ENCODE measurements at regions of chr7 and their contacts with region 1.

Region 1: GRCh38 chr7:106865130-106866041 is at the start of gene PIK3CG:
- DNase-seq: peak in 7 of 9 donors; percentile 43 to 77 (median 70)
- ATAC-seq: peak; percentile 96
- H3K4me3 ChIP-seq: peak within 1 kb of the TSS; percentile 62
- H3K4me3 Mint-ChIP-seq: peak within 1 kb of the TSS; percentile 86 to 98 (median 94)
- H3K27ac ChIP-seq: peak within 1 kb of the TSS; percentile 75
- H3K27ac Mint-ChIP-seq: peak within 1 kb of the TSS; percentile 90 to 96 (median 95)
- H3K4me1 ChIP-seq: peaks cover 50% of the 10 kb centered on the region in 2 donors
- H3K4me1 Mint-ChIP-seq: peaks cover 44 to 85% (median 72%) of the 10 kb centered on the region in 7 donors
- H3K27me3 ChIP-seq: no peaks in the 10 kb centered on the region
- H3K27me3 Mint-ChIP-seq: no peaks in the 10 kb centered on the region
- total RNA-seq, gene PIK3CG: 25.1 to 54.9 (median 30.6) TPM

Region 2: DNA sequence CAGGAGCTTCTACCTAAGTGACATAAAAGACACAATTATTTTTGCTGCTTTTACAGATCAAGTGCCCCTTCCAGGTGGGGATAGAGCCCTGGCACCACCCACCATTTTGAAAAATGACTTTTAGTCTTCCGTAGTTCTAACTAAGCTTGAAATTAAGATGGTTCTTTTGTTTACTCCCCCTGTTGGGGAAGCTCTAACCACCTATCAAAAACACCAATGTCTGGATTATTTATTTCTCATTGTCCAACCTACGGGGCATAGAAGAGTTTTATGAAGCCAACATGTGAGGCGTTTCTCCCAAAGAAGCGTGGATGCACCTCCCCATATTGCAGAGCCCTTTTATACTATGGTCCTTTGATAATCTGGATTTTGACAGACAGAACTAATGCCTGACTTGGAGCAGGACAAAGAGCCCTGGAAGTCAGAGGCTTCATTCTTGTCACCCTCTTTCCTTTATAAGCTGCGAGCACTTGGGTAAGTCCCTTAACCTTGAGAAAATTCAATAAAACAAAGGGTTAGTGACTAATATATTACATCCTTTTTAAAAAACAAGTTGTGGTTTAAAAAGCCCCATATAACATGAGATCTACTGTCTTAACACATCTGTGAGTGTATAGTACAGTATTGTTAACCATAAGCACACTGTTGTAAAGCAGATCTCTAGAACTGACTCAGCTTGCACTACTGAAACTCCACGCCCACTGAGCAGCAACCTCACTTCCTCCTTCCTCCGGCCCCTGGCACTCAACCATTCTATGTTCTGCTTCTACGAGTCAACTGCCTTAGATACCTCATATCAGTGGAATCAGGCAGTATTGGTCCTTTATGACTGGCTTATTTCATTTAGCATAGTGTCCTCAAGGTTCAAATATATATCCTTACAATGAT is 1056.4 kb before region 1 on chr7:
- CTCF ChIA-PET with region 1: no interaction called
- POLR2A ChIA-PET with region 1: no interaction called
- intact Hi-C with region 1: loop called in 1 of 2 experiments (anchors 2 kb)
- DNase-seq: peak; percentile 11 to 77 (median 38)
- ATAC-seq: peak; percentile 94
- H3K4me3 ChIP-seq: peak overlapping the region; percentile 25
- H3K4me3 Mint-ChIP-seq: peak overlapping the region in 8 of 10 donors; percentile 1 to 68 (median 31)
- H3K27ac ChIP-seq: peak overlapping the region; percentile 15
- H3K27ac Mint-ChIP-seq: peak overlapping the region in 8 of 9 donors; percentile 0 to 93 (median 45)
- H3K4me1 ChIP-seq: peaks cover 33 to 50% of the 10 kb centered on the region in 2 donors
- H3K4me1 Mint-ChIP-seq: peaks cover 40 to 73% (median 65%) of the 10 kb centered on the region in 7 donors
- H3K27me3 ChIP-seq: no peaks in the 10 kb centered on the region
- H3K27me3 Mint-ChIP-seq: no peaks in the 10 kb centered on the region

Region 3: GRCh38 chr7:106767498-106768323 is 97.7 kb before region 1 on chr7:
- CTCF ChIA-PET with region 1: no interaction called
- POLR2A ChIA-PET with region 1: no interaction called
- intact Hi-C with region 1: loop called in 1 of 2 experiments (anchors 1 kb)
- DNase-seq: peak in 7 of 9 donors; percentile 5 to 38 (median 18)
- ATAC-seq: peak; percentile 71
- H3K4me3 ChIP-seq: peak overlapping the region; percentile 36
- H3K4me3 Mint-ChIP-seq: peak overlapping the region; percentile 58 to 83 (median 74)
- H3K27ac ChIP-seq: no peak overlapping the region
- H3K27ac Mint-ChIP-seq: peak overlapping the region; percentile 26 to 94 (median 56)
- H3K4me1 ChIP-seq: peaks cover 9 to 15% of the 10 kb centered on the region in 2 donors
- H3K4me1 Mint-ChIP-seq: peaks cover 15 to 33% (median 28%) of the 10 kb centered on the region in 7 donors
- H3K27me3 ChIP-seq: no peaks in the 10 kb centered on the region
- H3K27me3 Mint-ChIP-seq: no peaks in the 10 kb centered on the region

Region 4: GRCh38 chr7:106806556-106806955 is 58.8 kb before region 1 on chr7:
- CTCF ChIA-PET with region 1: no interaction called
- POLR2A ChIA-PET with region 1: no interaction called
- intact Hi-C with region 1: no loop called
- DNase-seq: no peak
- ATAC-seq: no peak
- H3K4me3 ChIP-seq: no peak overlapping the region
- H3K4me3 Mint-ChIP-seq: no peak overlapping the region
- H3K27ac ChIP-seq: no peak overlapping the region
- H3K27ac Mint-ChIP-seq: no peak overlapping the region
- H3K4me1 ChIP-seq: no peaks in the 10 kb centered on the region
- H3K4me1 Mint-ChIP-seq: peaks cover 0 to 4% (median 0%) of the 10 kb centered on the region in 7 donors
- H3K27me3 ChIP-seq: peaks cover 0 to 3% of the 10 kb centered on the region in 2 donors
- H3K27me3 Mint-ChIP-seq: peaks cover 0 to 15% (median 0%) of the 10 kb centered on the region in 5 donors

Region 5: DNA sequence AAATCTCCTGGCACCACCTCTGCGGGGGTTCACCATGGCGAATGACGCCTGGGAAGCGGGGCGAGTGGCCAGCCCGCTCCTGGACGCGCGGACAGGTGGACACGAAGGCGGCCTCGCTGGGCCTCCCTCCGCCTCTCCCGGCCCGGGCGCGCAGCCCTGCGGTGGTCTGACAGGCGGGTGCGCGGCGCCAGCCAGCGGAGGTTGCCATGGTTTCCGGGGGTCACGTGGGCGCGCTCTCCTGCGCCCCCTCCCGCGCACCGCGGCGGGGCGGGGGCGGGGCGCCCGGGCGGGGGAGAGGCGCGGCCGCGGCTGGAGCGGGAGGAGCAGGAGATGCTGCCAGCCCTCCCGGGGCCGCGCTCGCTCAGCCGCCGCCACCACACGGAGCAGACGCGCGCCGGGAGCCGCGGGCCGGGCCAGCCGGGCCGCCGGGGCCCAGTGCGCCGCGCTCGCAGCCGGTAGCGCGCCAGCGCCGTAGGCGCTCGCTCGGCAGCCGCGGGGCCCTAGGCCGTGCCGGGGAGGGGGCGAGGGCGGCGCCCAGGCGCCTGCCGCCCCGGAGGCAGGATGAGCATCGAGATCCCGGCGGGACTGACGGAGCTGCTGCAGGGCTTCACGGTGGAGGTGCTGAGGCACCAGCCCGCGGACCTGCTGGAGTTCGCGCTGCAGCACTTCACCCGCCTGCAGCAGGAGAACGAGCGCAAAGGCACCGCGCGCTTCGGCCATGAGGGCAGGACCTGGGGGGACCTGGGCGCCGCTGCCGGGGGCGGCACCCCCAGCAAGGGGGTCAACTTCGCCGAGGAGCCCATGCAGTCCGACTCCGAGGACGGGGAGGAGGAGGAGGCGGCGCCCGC is 179.2 kb after region 1 on chr7 and contains the start of gene PRKAR2B:
- CTCF ChIA-PET with region 1: no interaction called
- POLR2A ChIA-PET with region 1: no interaction called
- intact Hi-C with region 1: loop called (anchors 5 to 10 kb)
- DNase-seq: peak; percentile 69 to 81 (median 79)
- ATAC-seq: peak; percentile 96
- H3K4me3 ChIP-seq: peak within 1 kb of the TSS; percentile 53
- H3K4me3 Mint-ChIP-seq: peak within 1 kb of the TSS; percentile 78 to 96 (median 90)
- H3K27ac ChIP-seq: peak within 1 kb of the TSS; percentile 33
- H3K27ac Mint-ChIP-seq: peak within 1 kb of the TSS in 7 of 9 donors; percentile 48 to 89 (median 77)
- H3K4me1 ChIP-seq: peaks cover 4 to 10% of the 10 kb centered on the region in 2 donors
- H3K4me1 Mint-ChIP-seq: peaks cover 11 to 19% (median 15%) of the 10 kb centered on the region in 7 donors
- H3K27me3 ChIP-seq: peaks cover 4 to 8% of the 10 kb centered on the region in 2 donors
- H3K27me3 Mint-ChIP-seq: peaks cover 13 to 47% (median 29%) of the 10 kb centered on the region in 5 donors
- total RNA-seq, gene PRKAR2B: 0.43 to 5.0 (median 0.67) TPM

Region 6: DNA sequence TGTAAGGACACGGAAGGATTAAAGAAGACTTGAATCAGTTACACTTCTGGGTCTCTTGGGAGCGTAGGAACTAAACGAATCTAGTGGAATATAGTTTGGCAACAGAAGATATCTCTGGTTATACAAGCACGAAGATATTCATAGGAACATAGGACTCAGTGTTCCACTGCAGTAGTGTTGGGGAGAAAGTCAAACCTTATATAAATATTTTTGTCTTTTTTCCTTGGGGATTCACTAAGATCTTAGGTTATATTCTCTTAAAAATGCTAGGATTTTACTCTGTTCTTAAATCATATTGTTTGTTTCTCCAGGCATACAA is 200.5 kb after region 1 on chr7:
- CTCF ChIA-PET with region 1: no interaction called
- POLR2A ChIA-PET with region 1: no interaction called
- intact Hi-C with region 1: no loop called
- DNase-seq: no peak
- ATAC-seq: no peak
- H3K4me3 ChIP-seq: no peak overlapping the region
- H3K4me3 Mint-ChIP-seq: no peak overlapping the region
- H3K27ac ChIP-seq: no peak overlapping the region
- H3K27ac Mint-ChIP-seq: no peak overlapping the region
- H3K4me1 ChIP-seq: no peaks in the 10 kb centered on the region
- H3K4me1 Mint-ChIP-seq: peaks cover 0 to 3% (median 0%) of the 10 kb centered on the region in 7 donors
- H3K27me3 ChIP-seq: no peaks in the 10 kb centered on the region
- H3K27me3 Mint-ChIP-seq: peaks cover 0 to 24% (median 3%) of the 10 kb centered on the region in 5 donors

Region 7: DNA sequence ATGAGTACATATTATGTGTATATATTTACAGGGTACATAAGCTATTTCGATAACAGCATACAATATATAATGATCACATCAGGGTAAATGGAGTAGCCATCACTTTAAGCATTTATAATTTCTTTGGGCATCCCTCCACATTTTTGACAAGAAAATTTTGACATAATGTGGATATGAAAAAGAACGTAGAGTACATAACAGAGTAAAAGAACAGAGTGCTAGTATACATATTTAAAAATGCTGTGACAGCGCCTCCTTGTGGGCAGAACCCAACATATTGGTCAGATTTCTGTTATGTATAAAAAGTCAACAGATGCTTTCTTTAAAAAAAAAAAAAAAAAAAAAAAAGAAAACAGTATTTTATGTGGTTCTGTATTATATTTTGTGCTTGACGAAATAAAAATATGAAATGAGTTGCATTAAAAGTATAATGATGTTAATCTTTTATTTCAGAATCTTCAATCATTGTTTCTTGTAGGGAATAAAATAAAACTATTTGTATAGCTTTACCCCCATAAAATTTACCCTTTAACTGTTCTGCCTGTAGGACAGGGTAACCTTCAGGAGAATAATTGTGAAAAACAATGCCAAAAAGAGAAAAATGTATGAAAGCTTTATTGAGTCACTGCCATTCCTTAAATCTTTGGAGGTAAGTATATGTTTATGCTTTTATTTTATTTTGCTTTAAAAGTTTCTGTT is 285.1 kb after region 1 on chr7:
- CTCF ChIA-PET with region 1: interaction called, 7 read pairs
- POLR2A ChIA-PET with region 1: no interaction called
- intact Hi-C with region 1: loop called in 1 of 2 experiments (anchors 1 kb)
- DNase-seq: peak; percentile 45 to 79 (median 72)
- ATAC-seq: peak; percentile 88
- H3K4me3 ChIP-seq: no peak overlapping the region
- H3K4me3 Mint-ChIP-seq: no peak overlapping the region
- H3K27ac ChIP-seq: no peak overlapping the region
- H3K27ac Mint-ChIP-seq: no peak overlapping the region
- H3K4me1 ChIP-seq: no peaks in the 10 kb centered on the region
- H3K4me1 Mint-ChIP-seq: peaks cover 0 to 12% (median 4%) of the 10 kb centered on the region in 7 donors
- H3K27me3 ChIP-seq: no peaks in the 10 kb centered on the region
- H3K27me3 Mint-ChIP-seq: peaks cover 0 to 7% (median 3%) of the 10 kb centered on the region in 5 donors

Region 8: DNA sequence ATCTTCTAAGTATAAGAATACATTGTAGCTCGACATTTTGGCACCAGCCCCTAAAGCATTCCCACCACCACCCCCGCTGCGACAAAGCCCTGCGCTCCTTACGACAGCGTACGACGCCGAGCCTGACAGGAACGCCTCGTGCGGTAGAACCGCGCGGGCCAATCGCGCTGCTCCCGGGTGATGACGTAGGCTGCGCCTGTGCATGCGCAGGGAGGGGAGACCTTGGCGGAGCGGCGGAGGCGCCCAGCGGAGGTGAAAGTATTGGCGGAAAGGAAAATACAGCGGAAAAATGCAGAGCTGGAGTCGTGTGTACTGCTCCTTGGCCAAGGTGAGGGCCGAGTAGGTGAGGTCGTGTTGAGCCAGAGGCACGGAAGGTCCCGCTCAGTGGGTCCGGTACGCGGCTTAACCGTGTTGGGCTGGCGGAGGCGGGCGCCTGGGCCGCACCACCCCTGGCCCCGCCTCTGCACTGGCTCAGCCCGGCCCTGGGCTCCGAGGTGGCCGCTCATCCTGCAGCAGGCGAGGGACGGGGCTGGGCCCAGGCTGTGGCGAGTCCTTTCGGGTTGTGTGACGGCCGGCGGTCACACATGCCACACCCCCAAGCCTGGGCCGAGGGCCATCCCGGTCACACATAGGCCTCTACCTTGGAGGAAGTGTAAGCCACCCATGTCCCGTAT is 1025.7 kb after region 1 on chr7 and contains the start of gene DLD:
- CTCF ChIA-PET with region 1: no interaction called
- POLR2A ChIA-PET with region 1: no interaction called
- intact Hi-C with region 1: loop called in 1 of 2 experiments (anchors 1 kb)
- DNase-seq: peak; percentile 89 to 94 (median 93)
- ATAC-seq: peak; percentile 98
- H3K4me3 ChIP-seq: peak within 1 kb of the TSS; percentile 93
- H3K4me3 Mint-ChIP-seq: peak within 1 kb of the TSS; percentile 89 to 100 (median 97)
- H3K27ac ChIP-seq: peak within 1 kb of the TSS; percentile 97
- H3K27ac Mint-ChIP-seq: peak within 1 kb of the TSS; percentile 94 to 100 (median 98)
- H3K4me1 ChIP-seq: peaks cover 5 to 35% of the 10 kb centered on the region in 2 donors
- H3K4me1 Mint-ChIP-seq: peaks cover 20 to 55% (median 52%) of the 10 kb centered on the region in 7 donors
- H3K27me3 ChIP-seq: no peaks in the 10 kb centered on the region
- H3K27me3 Mint-ChIP-seq: peaks cover 0 to 3% (median 0%) of the 10 kb centered on the region in 5 donors
- total RNA-seq, gene DLD: 44.5 to 69.3 (median 53.7) TPM

Measured in naive thymus-derived CD4-positive, alpha-beta T cell (primary cell).